ENCODE measurements at regions of chr11 and their contacts with region 1.

Region 1: DNA sequence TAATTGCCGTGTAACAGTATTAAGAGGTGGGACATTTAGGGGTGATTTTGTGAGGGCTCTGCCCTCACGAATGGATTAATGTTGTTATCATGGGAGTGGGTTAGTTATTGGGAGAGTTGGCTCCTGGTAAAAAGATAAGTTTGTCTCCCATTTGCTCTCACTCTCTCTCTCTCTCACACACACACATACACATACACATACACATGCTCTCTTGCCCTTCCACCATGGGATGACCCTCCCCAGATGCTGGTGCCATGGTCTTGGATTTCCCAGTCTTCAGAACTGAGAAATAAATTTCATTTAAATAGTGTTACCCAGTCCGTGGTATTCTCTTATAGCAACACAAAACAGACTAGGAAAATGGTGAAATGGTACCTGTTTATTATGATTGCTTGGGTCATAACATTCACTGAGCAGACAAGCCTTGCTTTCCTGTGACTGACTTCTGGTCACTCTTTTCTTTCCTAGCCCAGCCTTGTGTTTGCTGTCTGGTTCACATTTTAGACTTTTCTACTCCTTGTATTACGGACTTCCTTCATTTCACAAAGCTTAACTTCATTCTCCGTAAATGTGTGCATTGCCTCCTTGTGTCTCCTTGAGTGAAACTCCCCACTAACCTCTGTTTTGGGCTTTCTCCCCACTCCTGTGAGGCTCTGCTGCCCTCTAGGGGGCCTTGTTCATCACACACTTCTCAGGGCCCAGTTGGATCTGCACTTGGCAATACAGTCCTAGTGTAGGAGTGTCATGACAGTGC is 206.5 kb upstream of the CTSC start:
- DNase-seq: peak; percentile 89
- H3K4me3 ChIP-seq: no peak overlapping the region
- H3K27ac ChIP-seq: no peak overlapping the region
- H3K4me1 ChIP-seq: no peaks in the 10 kb centered on the region
- H3K27me3 ChIP-seq: no peaks in the 10 kb centered on the region
- CTCF ChIP-seq: peak; percentile 77 to 81 (median 79)
- POLR2A ChIP-seq: no peak

Region 2: DNA sequence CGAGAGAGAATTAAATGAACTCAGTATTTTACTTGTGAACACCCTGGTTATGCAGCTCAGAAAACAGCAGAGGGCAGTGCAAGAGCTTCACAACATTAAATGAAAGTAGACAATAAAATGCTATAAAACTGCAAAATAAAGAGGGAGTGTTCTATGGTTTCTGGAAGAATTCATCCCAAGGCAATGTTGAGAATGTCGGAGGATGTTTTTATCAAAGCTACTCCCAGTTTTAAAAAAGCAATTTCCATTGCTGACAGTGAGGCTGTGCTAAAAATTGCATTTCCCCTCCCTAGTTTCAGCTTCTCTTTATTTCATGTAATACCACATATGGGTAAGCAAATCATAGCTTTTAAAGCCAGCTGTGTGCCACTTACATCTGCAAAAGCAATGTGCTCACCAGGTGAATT is 665.7 kb before region 1 on chr11:
- intact Hi-C with region 1: loop called (anchors 5 kb)
- DNase-seq: peak; percentile 58
- H3K4me3 ChIP-seq: no peak overlapping the region
- H3K27ac ChIP-seq: no peak overlapping the region
- H3K4me1 ChIP-seq: no peaks in the 10 kb centered on the region
- H3K27me3 ChIP-seq: no peaks in the 10 kb centered on the region
- CTCF ChIP-seq: peak in 2 of 3 experiments; percentile 35 to 42
- POLR2A ChIP-seq: no peak

Region 3: DNA sequence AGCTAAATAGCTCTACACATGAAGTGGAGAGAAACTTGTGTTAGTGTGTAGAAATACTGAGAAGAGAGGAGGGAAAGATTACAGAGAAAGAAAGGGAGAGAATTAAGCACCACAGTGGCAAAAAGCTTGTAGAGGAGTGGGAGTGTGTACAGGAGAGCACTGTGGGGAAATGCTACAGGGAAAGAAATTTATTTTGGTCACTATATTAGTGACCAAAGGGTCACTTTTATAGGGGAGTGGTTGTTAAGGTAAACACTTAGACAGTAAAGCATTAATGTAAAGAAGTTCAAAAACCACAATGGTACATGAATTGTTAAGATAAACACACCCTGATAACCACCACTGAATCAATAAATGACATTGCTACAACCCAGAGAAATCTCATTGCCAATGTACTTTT is 100.6 kb after region 1 on chr11:
- intact Hi-C with region 1: no loop called
- DNase-seq: no peak
- H3K4me3 ChIP-seq: no peak overlapping the region
- H3K27ac ChIP-seq: no peak overlapping the region
- H3K4me1 ChIP-seq: no peaks in the 10 kb centered on the region
- H3K27me3 ChIP-seq: no peaks in the 10 kb centered on the region
- CTCF ChIP-seq: no peak
- POLR2A ChIP-seq: no peak

Region 4: GRCh38 chr11:88770475-88771079 is 226.5 kb after region 1 on chr11:
- intact Hi-C with region 1: no loop called
- DNase-seq: no peak
- H3K4me3 ChIP-seq: no peak overlapping the region
- H3K27ac ChIP-seq: no peak overlapping the region
- H3K4me1 ChIP-seq: no peaks in the 10 kb centered on the region
- H3K27me3 ChIP-seq: no peaks in the 10 kb centered on the region
- CTCF ChIP-seq: no peak
- POLR2A ChIP-seq: no peak